GM10248 (cell line): ENCODE measurements at regions of chr5 and their contacts with region 1.

Region 1: DNA sequence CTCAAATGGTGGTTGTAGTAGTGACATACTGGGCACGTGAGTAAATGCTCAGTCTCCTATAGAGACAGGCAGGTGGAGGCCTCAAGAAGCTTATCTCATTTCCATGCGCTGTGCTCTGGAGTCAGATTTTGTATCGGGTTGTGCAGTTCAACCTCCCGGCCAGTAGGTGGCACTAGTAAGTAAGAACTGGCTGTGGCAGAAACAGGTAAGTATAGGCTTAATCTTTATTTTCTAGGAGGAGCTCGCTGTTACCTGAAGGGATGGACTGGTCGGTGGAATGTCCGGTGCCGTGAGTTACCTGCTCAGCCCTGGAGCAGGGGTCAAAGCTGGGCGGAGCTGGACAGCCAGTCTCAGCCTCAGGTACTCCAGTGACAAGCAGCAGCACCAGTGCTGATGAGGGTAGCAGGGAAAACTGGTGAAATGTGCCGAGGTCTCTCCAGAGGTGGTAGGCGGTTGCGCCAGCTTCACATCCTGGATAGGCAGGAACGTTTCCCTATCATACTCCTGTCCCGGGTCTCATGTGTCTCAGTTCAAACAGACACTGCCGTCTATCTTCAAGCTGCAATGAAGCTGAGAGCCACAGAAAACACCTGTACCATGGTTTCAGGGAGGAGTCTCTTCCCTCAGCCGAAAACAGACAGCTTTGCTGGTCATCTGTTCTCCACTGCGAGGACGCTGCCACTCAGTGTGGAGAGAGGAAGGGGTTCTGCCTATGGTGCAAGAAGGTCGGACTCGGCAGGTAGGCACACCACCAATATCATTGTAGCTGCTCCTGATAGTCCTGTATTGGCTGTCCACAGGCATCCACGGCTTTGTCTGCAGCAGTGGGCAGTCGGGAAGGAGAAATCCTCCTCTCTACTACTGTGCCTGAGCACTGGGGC is 880.3 kb upstream of the SEMA6A start:
- DNase-seq: peak; percentile 55
- CTCF ChIP-seq: peak; percentile 87

Region 2: DNA sequence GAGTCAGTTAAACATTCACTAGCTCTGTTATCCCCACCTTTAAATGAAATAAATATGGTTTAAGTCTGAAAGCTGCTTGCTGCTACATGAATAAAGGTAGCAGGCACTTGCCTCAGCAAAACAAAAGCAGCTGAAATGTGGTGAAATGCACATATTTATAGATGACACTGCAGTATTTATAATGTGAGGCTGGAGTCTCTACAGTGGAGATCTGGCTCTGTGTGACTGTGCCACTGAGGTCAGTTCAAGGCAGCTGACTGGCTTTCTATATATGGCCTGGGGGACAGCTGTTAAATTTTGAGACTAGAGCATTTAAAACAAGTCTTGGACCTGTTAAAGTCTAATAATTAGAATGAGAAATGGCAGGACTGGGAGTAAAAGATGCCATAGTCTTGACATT is 20.7 kb before region 1 on chr5:
- CTCF ChIA-PET with region 1: interaction called, 10 read pairs
- POLR2A ChIA-PET with region 1: no interaction called
- DNase-seq: no peak
- CTCF ChIP-seq: no peak

Region 3: GRCh38 chr5:117473165-117473564 is 18.2 kb after region 1 on chr5:
- CTCF ChIA-PET with region 1: interaction called, 49 read pairs
- POLR2A ChIA-PET with region 1: no interaction called
- DNase-seq: no peak
- CTCF ChIP-seq: no peak

Region 4: GRCh38 chr5:117486869-117487472 is 32.0 kb after region 1 on chr5:
- CTCF ChIA-PET with region 1: interaction called, 10 read pairs
- POLR2A ChIA-PET with region 1: no interaction called
- DNase-seq: no peak
- CTCF ChIP-seq: no peak

Region 5: DNA sequence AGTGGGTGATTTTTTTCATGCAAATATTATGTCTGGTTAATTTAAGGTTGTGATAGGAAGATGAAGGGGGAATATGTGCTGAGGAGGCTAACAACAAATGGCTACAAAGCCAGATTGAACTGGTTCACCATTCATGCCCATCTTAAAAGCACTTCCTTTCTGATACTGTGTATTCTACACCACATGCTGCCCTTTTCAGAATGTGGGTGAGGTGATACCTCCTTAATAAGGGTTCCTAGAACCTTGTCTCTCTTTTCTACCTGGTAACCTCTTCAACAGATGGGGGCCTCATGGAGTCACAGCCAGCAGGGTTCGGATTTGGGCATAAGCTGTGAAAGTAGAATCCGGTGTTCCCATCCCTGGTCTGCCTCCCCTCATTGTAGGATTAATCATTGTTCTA is 183.6 kb after region 1 on chr5:
- CTCF ChIA-PET with region 1: no interaction called
- POLR2A ChIA-PET with region 1: no interaction called
- DNase-seq: no peak
- CTCF ChIP-seq: no peak

Region 6: DNA sequence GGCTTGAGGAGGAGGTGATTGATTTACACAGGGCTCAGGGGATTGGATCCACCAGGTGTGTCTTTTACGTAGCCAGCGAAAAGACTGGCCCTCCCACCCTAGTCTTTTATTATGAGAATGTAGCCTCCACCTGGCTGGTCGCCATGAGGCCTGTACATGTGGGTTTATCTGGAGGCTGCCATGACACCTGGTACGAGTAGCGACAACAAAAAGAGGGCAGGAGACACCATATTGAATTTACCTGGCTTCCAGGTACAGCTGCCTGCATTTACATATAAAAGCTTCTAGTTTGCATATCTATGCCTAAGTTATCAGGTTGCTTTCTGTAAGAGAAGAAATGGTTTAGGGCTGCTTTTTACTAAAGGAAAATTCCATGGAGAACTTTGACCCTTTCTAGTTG is 293.4 kb after region 1 on chr5:
- CTCF ChIA-PET with region 1: no interaction called
- POLR2A ChIA-PET with region 1: no interaction called
- DNase-seq: no peak
- CTCF ChIP-seq: no peak